CD14-positive monocyte (primary cell): ENCODE measurements at regions of chr9 and their contacts with region 1.

Region 1: DNA sequence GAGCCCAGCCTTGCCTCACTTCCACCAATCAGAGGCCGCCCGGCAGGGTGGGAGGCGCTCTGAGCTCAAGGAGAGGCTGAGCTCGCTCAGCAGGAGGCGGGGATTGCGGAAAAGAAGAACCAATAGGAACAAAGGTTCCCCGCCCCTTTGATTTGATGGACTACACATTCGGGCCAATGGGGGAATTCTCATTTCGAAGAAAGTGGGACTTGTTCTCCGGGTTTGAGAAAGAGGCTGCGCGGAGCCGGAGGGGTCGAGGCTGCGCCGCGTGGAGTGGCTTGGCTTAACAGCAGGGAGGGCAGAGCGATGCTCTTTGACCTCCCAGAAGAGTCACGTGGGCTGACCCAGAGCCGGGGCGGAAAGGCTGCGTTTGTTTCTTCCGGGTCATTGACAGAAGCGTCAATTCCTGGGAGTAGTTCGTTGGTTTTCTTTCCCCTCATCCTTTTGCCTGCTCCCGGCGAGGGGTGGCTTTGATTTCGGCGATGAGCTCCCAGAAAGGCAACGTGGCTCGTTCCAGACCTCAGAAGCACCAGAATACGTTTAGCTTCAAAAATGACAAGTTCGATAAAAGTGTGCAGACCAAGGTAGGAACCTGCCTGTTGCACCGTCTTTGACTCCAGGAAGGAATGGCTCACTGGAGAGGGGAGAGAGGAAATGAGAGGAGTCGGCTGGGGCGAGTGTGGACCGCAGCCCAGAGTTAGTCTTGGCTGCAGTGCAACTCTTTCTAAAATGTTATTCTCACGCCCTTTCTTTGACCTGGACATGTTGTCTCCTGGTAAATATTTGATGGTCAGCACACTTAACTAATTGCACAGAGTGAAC is at the start of gene C9orf85:
- DNase-seq: peak; percentile 98 to 99 (median 98)
- H3K4me3 ChIP-seq: peak within 1 kb of the TSS; percentile 75 to 89 (median 87)
- H3K4me3 Mint-ChIP-seq: peak within 1 kb of the TSS; percentile 97 to 100
- H3K27ac ChIP-seq: peak within 1 kb of the TSS; percentile 89
- H3K27ac Mint-ChIP-seq: peak within 1 kb of the TSS; percentile 90 to 99 (median 99)
- H3K4me1 ChIP-seq: peaks cover 22 to 40% of the 10 kb centered on the region in 2 donors
- H3K4me1 Mint-ChIP-seq: peaks cover 56% of the 10 kb centered on the region
- H3K27me3 ChIP-seq: no peaks in the 10 kb centered on the region
- H3K27me3 Mint-ChIP-seq: no peaks in the 10 kb centered on the region
- CTCF ChIP-seq: no peak
- polyA plus RNA-seq, gene C9orf85: 4.5 to 6.4 (median 5.4) TPM

Region 2: DNA sequence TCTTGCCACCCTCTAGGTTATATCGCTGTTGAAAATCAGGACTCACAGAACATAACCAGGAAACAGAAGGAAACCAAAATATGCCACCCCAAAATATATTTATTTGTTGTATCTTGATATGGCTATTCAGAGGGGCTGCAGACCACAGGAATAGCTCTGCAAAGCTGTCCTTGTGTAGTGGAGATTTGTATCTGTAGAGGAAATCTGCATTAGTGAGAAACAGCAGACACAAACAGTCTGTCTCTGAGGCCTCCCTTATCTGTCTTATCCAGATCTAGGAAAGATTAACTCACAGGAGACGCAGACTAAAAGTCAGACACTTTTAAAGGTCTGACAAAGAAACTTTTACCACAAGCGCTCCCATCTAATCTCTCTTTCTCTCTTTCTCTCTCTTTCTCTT is 89.0 kb before region 1 on chr9:
- intact Hi-C with region 1: loop called in 1 of 2 experiments (anchors 10 kb)
- DNase-seq: no peak
- H3K4me3 ChIP-seq: no peak overlapping the region
- H3K4me3 Mint-ChIP-seq: no peak overlapping the region
- H3K27ac ChIP-seq: no peak overlapping the region
- H3K27ac Mint-ChIP-seq: no peak overlapping the region
- H3K4me1 ChIP-seq: peaks cover 0 to 4% of the 10 kb centered on the region in 2 donors
- H3K4me1 Mint-ChIP-seq: peaks cover 5% of the 10 kb centered on the region
- H3K27me3 ChIP-seq: no peaks in the 10 kb centered on the region
- H3K27me3 Mint-ChIP-seq: peaks cover 0 to 2% (median 1%) of the 10 kb centered on the region in 3 donors
- CTCF ChIP-seq: no peak